PC-3 (cell line): ENCODE measurements at regions of chr1 and their contacts with region 1.

Region 1: GRCh38 chr1:45011837-45012638 is at the start of gene UROD:
- DNase-seq: peak; percentile 96
- ATAC-seq: peak; percentile 69
- H3K4me3 ChIP-seq: peak within 1 kb of the TSS; percentile 93
- H3K27ac ChIP-seq: peak within 1 kb of the TSS; percentile 37
- H3K4me1 ChIP-seq: peaks cover 22% of the 10 kb centered on the region
- H3K27me3 ChIP-seq: no peaks in the 10 kb centered on the region
- CTCF ChIP-seq: no peak
- total RNA-seq, gene UROD: 167 and 168 TPM in 2 replicates

Region 2: DNA sequence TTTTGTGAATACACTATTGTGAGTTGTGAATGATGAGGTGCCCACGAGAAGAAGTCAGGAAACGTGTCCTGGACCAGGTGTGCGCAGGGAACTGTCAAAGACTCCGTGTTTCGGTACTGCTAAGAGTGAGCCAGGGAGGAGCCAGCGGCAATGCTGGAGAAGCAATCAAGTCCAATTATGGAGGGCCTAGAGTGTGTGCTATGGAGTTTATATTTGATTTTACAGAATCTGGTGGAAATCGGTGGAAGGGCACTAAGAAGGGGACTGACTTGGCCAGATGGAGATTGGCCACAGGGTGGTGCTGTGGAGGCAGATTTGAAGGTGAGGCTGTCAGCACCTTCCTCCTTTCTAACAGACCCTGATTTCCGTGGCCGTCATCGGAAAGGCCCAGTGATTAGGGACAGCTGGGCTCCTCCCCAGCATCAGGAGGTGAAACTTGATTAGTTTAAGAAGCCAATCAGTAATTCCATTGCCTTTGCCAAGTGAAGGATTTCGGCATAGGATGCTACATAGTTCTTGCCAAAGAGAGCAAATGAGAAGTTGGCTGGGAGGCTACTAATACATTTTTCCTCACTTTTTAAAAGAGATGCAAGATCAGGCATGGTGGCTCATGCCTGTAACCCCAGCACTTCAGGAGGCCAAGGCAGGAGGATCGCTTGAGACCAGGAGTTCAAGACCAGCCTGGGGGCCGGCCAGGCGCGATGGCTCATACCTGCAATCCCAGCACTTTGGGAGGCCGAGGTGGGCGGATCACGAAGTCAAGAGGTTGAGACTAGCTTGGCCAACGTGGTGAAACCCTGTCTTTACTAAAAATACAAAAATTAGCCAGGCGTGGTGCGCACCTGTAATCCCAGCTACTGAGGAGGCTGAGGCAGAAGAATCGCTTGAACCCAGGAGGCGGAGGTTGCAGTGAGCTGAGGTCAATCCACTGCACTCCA is 176.0 kb before region 1 on chr1:
- CTCF ChIA-PET with region 1: no interaction called
- POLR2A ChIA-PET with region 1: no interaction called
- intact Hi-C with region 1: loop called (anchors 1 kb)
- DNase-seq: peak; percentile 85
- ATAC-seq: peak; percentile 93
- H3K4me3 ChIP-seq: no peak overlapping the region
- H3K27ac ChIP-seq: no peak overlapping the region
- H3K4me1 ChIP-seq: no peaks in the 10 kb centered on the region
- H3K27me3 ChIP-seq: no peaks in the 10 kb centered on the region
- CTCF ChIP-seq: peak; percentile 91

Region 3: DNA sequence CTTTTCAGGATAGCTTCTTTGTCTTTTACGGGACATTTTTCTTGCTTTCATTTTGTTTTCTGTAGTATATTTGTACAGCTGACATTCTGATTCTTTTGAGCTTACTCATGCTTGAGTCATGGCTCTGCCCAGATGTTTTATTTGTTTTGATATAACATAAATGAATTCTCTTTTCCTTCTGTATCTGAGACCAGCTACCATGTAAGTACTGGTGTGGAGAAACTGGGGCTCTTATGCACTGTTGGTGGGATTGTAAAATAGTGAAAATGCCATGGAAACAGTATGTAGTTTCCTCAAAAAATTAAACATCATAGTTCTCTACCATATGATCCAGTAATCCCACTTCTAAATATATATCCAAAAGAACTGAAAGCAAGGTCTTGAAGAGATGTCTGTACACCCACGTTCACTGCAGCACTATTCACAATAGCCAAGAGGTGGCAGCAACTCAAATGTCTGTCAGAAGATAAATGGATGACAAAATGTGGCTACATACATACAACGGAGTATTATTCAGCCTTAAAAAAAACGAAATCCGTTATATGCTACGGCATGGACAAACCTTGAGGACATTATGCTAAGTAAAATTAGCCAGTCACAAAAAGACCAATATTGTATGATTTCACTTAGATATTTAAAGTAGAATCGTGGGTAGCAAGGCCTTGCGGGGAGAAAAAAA is 87.1 kb before region 1 on chr1:
- CTCF ChIA-PET with region 1: interaction called, 4 read pairs
- POLR2A ChIA-PET with region 1: interaction called, 5 read pairs
- intact Hi-C with region 1: loop called (anchors 5 kb)
- DNase-seq: peak; percentile 85
- ATAC-seq: peak; percentile 94
- H3K4me3 ChIP-seq: peak overlapping the region; percentile 50; the same call in 1 of the 2 replicates
- H3K27ac ChIP-seq: peak overlapping the region; percentile 30
- H3K4me1 ChIP-seq: peaks cover 14% of the 10 kb centered on the region
- H3K27me3 ChIP-seq: no peaks in the 10 kb centered on the region
- CTCF ChIP-seq: peak; percentile 55

Region 4: GRCh38 chr1:45339789-45340570 is 327.9 kb after region 1 on chr1 and contains the starts of genes MUTYH and TOE1:
- CTCF ChIA-PET with region 1: interaction called, 3 read pairs
- POLR2A ChIA-PET with region 1: interaction called, 11 read pairs
- intact Hi-C with region 1: loop called (anchors 2 kb)
- DNase-seq: peak; percentile 93
- ATAC-seq: peak; percentile 80
- H3K4me3 ChIP-seq: peak within 1 kb of the TSS; percentile 83
- H3K27ac ChIP-seq: peak within 1 kb of the TSS; percentile 76
- H3K4me1 ChIP-seq: peaks cover 43% of the 10 kb centered on the region
- H3K27me3 ChIP-seq: no peaks in the 10 kb centered on the region
- CTCF ChIP-seq: no peak
- total RNA-seq, gene MUTYH: 21.4 and 22.8 TPM in 2 replicates
- total RNA-seq, gene TOE1: 18.2 and 19.5 TPM in 2 replicates

Region 5: GRCh38 chr1:45410850-45411314 is 398.8 kb after region 1 on chr1:
- CTCF ChIA-PET with region 1: no interaction called
- POLR2A ChIA-PET with region 1: no interaction called
- intact Hi-C with region 1: loop called (anchors 2 kb)
- DNase-seq: peak; percentile 74
- ATAC-seq: peak; percentile 79
- H3K4me3 ChIP-seq: no peak overlapping the region
- H3K27ac ChIP-seq: peak overlapping the region; percentile 65
- H3K4me1 ChIP-seq: peaks cover 18% of the 10 kb centered on the region
- H3K27me3 ChIP-seq: no peaks in the 10 kb centered on the region
- CTCF ChIP-seq: no peak